ENCODE measurements at regions of chr6 and their contacts with region 1.

Region 1: DNA sequence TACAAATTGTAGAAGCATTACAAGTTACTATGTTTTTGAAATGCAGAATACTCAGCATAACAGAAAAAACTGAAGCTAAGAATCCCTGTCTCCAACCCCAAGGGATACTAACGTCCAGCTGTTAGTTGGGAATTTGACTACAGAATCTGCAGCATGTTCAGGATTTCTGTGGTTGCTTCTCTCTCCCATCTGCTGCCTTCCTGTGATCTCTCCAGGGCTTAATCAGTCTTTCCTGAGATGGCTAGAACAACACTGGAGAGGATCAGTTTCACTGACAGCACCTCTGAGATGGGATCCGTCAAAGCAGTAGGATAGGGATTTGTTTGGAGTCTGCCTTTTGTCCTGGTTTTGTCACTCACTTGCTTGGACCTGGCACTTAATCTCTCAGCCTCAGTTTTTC is 73.3 kb upstream of the NUP153 start:
- DNase-seq: no peak
- H3K4me3 ChIP-seq: no peak overlapping the region
- H3K27ac ChIP-seq: no peak overlapping the region
- H3K4me1 ChIP-seq: no peaks in the 10 kb centered on the region
- H3K27me3 ChIP-seq: no peaks in the 10 kb centered on the region
- CTCF ChIP-seq: no peak

Region 2: GRCh38 chr6:17574866-17575560 is 205.0 kb before region 1 on chr6:
- CTCF ChIA-PET with region 1: interaction called, 15 read pairs
- POLR2A ChIA-PET with region 1: no interaction called
- intact Hi-C with region 1: no loop called
- DNase-seq: no peak
- H3K4me3 ChIP-seq: no peak overlapping the region
- H3K27ac ChIP-seq: no peak overlapping the region
- H3K4me1 ChIP-seq: no peaks in the 10 kb centered on the region
- H3K27me3 ChIP-seq: no peaks in the 10 kb centered on the region
- CTCF ChIP-seq: no peak

Region 3: DNA sequence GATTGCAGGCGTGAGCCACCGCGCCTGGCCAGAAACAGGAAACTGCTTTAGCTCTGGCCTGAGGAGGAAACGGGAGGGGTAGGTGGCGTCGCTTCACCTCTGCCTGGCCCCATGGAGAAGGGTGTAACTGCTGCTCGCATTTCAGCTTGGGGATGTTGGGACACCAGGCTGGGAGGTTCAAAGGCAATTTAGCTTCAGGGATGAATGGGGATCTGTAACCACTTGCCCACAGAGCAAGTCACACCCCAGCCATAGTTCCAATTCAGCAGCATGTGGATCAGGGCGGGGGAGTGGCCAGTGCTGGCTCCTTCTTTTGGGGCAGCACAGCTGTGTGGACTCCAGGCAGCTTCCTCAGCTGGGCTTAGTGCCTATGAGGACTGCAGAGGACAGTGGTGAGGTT is 38.6 kb before region 1 on chr6:
- CTCF ChIA-PET with region 1: no interaction called
- POLR2A ChIA-PET with region 1: interaction called, 23 read pairs
- intact Hi-C with region 1: no loop called
- DNase-seq: peak in 1 of 2 experiments; percentile 3
- H3K4me3 ChIP-seq: no peak overlapping the region
- H3K27ac ChIP-seq: no peak overlapping the region
- H3K4me1 ChIP-seq: no peaks in the 10 kb centered on the region
- H3K27me3 ChIP-seq: no peaks in the 10 kb centered on the region
- CTCF ChIP-seq: no peak